ENCODE measurements at regions of chr13 and their contacts with region 1.

Region 1: GRCh38 chr13:94667190-94667589 is 45.2 kb downstream of the SOX21 start:
- DNase-seq: peak; percentile 32
- H3K4me3 Mint-ChIP-seq: no peak overlapping the region
- H3K27ac Mint-ChIP-seq: peak overlapping the region; percentile 82
- H3K4me1 Mint-ChIP-seq: peaks cover 35% of the 10 kb centered on the region
- H3K27me3 Mint-ChIP-seq: peaks cover 9% of the 10 kb centered on the region

Region 2: GRCh38 chr13:94811753-94812152 is 144.6 kb after region 1 on chr13:
- CTCF ChIA-PET with region 1: no interaction called
- intact Hi-C with region 1: no loop called
- DNase-seq: no peak
- H3K4me3 Mint-ChIP-seq: no peak overlapping the region
- H3K27ac Mint-ChIP-seq: no peak overlapping the region
- H3K4me1 Mint-ChIP-seq: no peaks in the 10 kb centered on the region
- H3K27me3 Mint-ChIP-seq: peaks cover 3% of the 10 kb centered on the region

Region 3: DNA sequence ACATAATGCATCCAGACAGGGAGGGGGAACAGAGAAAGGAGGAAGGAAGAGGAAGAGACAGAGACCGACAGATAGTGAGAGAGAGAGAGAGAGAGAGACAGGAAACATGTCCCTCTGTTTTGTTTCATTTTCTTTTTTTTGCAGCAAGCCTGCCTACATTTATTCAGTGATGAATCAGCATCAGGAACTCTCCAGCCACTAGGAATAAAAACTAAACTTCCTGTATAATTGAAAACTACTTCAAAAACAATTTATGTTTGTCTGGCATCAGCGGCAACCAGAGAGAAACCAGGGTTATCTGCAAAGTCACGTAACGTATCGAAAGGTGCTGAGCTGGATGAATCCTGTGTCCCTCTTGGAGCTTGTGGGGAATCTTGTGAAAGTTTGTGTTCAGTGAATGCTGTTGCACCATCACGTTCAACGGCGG is 193.8 kb after region 1 on chr13:
- CTCF ChIA-PET with region 1: no interaction called
- intact Hi-C with region 1: no loop called
- DNase-seq: no peak
- H3K4me3 Mint-ChIP-seq: peak overlapping the region; percentile 74
- H3K27ac Mint-ChIP-seq: no peak overlapping the region
- H3K4me1 Mint-ChIP-seq: peaks cover 8% of the 10 kb centered on the region
- H3K27me3 Mint-ChIP-seq: no peaks in the 10 kb centered on the region

Region 4: DNA sequence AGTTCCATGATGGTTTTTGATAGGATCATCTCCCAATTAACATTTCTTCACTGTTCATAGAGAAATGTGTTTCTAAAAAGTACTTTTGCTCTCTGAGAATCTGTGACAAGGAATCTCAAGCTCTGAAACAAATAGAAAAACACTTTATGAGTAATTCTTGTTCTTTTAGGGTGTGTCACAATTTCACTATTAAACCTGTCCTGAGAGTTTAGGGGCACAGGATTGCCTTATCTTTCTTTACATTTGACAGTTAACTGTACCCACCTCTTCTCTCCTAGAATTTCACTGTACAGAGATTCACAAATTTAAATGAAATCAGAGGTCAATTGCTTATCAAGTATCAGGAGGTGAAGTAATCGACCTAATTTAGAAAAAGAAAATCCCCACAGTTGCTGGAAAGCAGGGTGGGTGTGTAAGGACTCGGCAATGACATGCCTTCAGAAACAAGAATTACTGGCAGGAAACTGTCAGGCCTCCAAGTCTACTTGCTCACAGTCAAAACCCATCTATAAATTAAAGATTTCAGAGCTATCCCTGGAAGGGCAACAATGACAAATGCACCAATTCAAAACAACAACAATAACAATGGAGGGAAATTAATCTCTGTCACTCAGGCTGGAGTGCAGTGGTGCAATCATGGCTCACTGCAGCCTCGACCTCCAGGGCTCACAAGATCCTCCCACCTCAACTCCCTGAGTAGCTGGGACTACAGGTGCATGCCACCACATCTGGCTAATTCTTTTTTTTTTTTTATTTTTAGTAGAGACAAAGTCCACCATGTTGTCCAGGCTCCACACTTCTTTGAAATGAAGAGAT is 383.8 kb after region 1 on chr13:
- CTCF ChIA-PET with region 1: no interaction called
- intact Hi-C with region 1: loop called (anchors 5 kb)
- DNase-seq: peak; percentile 16
- H3K4me3 Mint-ChIP-seq: no peak overlapping the region
- H3K27ac Mint-ChIP-seq: no peak overlapping the region
- H3K4me1 Mint-ChIP-seq: peaks cover 20% of the 10 kb centered on the region
- H3K27me3 Mint-ChIP-seq: no peaks in the 10 kb centered on the region

Region 5: GRCh38 chr13:95355494-95355893 is 688.3 kb after region 1 on chr13:
- CTCF ChIA-PET with region 1: no interaction called
- intact Hi-C with region 1: no loop called
- DNase-seq: no peak
- H3K4me3 Mint-ChIP-seq: no peak overlapping the region
- H3K27ac Mint-ChIP-seq: no peak overlapping the region
- H3K4me1 Mint-ChIP-seq: no peaks in the 10 kb centered on the region
- H3K27me3 Mint-ChIP-seq: peaks cover 2% of the 10 kb centered on the region

Measured in activated naive CD4-positive, alpha-beta T cell treated with anti-CD3 and anti-CD28 coated beads for 36 hours (primary cell).